BJ (cell line): ENCODE measurements at regions of chr17 and their contacts with region 1.

Region 1: DNA sequence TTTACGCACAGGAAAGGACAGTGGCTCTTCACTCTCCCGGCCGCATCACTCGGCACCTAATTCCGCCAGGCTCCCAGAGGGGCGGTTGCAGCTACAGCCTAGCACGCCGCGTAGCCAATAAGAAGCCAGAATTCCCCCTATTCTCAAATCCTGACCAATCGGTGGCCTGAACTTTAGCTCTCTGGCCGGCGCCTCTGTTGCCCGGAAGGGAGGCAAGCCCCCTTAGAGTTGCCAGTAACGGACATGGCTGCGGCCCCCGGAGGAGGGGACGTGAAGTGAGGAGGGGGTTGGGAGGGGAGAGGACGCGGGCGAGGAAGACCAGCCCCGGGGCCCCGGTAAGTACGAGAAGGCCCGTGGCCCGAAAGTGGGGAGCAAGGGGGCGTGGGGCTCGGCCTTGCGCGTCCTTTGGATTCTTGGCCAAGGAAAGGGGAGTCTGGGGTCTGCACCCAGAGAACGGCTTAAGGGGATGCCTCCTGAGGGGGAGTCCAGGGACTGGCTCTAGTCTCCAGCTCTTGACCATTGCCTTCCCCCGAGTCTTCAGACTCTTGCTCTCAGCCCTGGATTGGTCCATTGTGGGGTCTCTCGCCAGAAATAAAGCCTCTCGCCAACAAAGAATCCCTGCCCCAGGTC is at the start of gene TMEM94:
- DNase-seq: peak; percentile 81
- H3K4me3 ChIP-seq: peak within 1 kb of the TSS; percentile 93
- H3K27me3 ChIP-seq: no peaks in the 10 kb centered on the region
- CTCF ChIP-seq: no peak
- polyA plus RNA-seq, gene TMEM94: 14.0 and 35.5 TPM in 2 replicates

Region 2: DNA sequence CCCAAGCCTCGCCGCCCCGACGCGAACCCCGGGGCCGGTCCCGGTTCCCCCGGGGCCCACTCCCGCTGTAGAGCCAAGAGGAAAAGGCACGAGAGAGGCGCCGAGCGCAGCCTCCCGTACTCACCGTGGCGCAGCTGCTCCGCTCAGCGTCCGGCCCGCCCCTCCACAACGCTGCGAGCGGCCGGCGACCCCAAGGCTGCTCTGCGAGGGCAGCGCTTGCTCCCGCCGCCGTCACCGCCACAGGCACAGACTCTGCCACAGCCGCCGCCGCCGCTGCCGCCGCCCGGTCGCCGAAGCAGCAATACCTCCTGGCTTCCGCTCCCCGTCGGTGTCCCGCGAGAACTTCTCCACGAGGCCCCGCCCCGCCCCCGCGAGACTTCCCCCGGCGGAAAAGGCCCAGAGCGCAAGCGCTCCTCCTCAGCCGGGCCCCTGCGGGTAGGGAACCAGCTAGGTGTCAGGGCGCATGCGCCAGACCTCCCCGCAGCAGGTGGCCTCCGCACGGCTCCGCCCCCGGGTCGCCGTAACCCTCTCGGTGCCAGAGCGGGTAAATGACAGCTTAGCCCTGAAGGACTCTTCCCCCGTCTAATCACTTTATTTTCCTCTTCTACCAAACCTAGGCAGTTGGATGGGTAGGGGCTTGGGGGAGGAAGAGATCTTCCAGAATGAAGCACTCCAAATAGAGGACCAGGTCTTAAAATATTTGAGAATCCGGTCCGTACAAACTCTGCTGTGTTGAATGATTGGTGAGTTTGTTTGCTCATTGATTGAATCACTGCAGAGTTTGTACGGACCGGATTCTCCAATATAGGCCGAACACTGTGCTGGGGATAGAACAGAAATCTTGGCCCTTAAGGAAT is 50.9 kb before region 1 on chr17 and contains the start of gene GRB2:
- CTCF ChIA-PET with region 1: no interaction called
- POLR2A ChIA-PET with region 1: no interaction called
- DNase-seq: peak; percentile 58
- H3K4me3 ChIP-seq: peak within 1 kb of the TSS; percentile 93
- H3K27me3 ChIP-seq: peaks cover 5% of the 10 kb centered on the region; the same call in 1 of the 2 replicates
- CTCF ChIP-seq: no peak
- polyA plus RNA-seq, gene GRB2: 46.5 and 50.7 TPM in 2 replicates

Region 3: DNA sequence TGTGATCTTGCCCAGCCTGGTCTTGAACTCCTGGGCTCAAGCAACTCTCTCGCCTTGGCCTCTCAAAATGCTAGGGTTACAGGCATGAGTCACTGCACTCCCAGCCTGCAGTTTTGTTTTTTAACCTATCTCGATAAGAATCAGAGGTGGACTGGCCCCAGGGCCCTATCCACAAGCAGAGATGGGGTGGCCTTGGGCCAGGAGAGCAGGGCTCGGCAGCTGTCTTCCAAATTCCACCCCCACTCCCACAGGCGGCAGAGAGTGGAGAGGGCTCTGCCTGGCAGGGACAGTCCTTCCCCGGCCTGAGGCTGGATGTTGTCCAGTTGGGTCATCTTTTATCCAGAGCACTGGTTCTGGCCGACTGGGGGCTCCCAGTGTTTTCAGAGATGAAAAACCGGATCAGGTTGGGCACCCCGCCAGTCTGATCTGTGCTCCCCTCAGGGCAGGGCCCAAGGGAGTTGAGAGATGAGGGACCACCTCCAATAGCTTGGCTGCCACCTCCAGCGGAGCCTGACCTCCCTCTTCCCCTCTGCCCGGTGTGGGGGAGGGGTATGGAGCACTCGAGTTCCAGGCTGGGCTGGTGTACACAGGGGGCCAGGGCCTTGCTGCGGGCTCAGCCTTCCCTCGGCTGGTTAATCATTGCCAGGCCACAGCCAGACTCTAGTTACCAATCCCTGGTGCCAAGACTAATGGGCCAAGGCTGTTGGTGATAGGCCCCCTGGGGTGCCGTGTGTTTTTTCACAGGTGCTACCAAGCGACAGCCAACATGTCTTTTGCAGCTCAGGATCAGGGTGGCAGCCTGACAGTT is 100.7 kb after region 1 on chr17:
- CTCF ChIA-PET with region 1: no interaction called
- POLR2A ChIA-PET with region 1: interaction called, 12 read pairs
- DNase-seq: peak; percentile 11
- H3K4me3 ChIP-seq: no peak overlapping the region
- H3K27me3 ChIP-seq: no peaks in the 10 kb centered on the region
- CTCF ChIP-seq: no peak

Region 4: DNA sequence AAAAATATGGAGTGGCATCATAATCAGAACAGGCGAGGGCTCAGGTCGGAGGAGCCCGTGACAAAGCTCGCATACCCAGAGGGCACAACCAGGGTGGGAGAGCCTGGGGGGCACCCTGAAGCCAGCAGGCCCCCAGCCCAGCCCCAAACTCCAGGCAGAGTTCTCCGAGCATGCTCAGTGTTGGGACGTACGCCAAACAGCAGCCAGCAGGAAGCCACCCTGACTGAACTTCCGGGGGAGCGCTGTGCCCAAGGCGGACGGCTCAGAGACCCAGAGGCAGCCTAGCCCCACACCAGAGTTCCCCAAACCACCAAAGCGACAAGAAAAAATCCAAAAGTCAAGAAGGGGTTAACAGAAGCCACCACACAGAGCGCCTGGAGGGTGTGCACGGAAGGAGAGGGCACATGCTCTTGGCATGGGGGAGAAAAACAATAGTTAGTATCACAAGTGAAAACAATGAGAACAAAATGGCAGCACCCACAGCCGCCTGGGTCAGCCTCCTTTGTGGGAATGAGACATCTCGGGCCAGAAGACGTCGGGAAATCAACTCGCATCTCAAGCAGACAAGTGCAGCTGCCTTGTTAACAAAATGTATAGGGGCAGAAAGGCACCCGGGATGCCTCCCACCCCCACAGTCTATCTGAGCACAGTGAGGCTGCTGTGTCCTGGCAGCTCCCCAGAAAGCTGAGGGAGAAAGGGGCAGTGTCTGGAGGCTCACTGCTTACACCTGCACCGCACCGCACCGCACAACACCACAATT is 635.2 kb after region 1 on chr17:
- CTCF ChIA-PET with region 1: no interaction called
- POLR2A ChIA-PET with region 1: no interaction called
- DNase-seq: no peak
- H3K4me3 ChIP-seq: no peak overlapping the region
- H3K27me3 ChIP-seq: no peaks in the 10 kb centered on the region
- CTCF ChIP-seq: no peak